ENCODE measurements at regions of chr9 and their contacts with region 1.

Region 1: DNA sequence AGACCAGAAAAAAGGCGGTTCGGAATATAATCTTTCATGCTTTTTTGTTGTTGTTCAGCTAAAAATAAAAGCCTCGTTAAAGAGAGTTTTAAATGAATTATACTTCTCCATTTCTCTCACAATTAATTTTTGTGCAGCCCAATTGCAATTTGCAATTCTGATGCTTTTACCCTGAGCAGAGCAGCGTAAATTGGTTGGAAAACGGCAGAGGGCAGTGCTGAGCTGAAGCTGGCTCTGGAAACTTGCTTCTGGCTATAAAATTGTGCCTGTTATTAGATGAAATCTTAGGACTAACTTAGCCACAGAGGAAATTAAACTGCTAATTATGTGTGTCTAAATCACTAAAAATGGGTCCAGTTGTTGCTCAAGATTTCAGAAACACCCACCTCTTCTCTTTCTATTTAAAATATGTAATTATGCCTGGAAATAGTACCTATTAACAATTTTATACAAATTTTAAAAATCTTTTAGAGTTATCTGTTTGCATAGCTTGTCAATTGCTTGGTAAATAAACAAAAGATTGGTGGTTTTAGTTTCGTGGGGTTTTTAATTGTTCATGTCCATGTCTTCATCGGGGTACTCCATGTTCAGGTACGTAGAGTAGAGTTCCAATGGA is 441.8 kb upstream of the TLE4 start:
- DNase-seq: peak; percentile 21
- H3K4me3 ChIP-seq: no peak overlapping the region
- H3K27ac ChIP-seq: no peak overlapping the region
- H3K4me1 ChIP-seq: no peaks in the 10 kb centered on the region
- H3K27me3 ChIP-seq: no peaks in the 10 kb centered on the region
- CTCF ChIP-seq: peak; percentile 79 to 92

Region 2: DNA sequence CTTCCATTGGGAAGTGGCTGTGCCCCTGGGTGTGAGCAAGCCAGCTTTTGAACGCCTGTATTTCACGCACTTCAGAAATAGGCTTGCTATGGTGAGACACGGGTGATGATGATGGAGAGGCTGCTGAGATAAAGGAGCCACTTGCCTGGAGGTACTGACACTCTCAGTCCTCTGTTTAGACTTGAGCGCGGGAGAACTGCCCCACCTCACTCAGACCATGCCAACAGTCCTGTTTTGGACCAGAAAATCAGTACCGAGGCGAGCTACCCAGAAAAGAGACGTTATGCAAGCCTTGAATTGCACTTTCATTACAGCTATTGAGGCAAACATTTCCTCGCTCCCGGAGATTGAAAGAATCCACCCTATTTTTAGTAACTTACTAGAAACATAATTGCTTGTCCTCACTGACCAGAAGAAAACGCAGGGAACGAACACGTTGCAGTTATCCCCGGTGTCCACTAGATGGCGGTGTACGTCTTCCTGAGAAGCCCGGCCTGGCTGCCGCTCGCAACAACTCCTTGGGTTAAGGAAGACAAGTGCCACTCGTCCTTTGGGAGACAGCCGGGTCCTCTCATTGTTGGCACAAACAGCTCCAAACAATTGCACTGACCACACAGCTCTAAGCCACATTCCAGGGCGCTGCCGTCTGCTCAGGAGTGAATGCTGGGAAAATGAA is 690.6 kb before region 1 on chr9:
- CTCF ChIA-PET with region 1: no interaction called
- dilution Hi-C with region 1: no loop called
- in situ Hi-C with region 1: no loop called
- intact Hi-C with region 1: loop called (anchors 5 kb)
- DNase-seq: peak; percentile 64
- H3K4me3 ChIP-seq: no peak overlapping the region
- H3K27ac ChIP-seq: no peak overlapping the region
- H3K4me1 ChIP-seq: no peaks in the 10 kb centered on the region
- H3K27me3 ChIP-seq: peaks cover 2% of the 10 kb centered on the region
- CTCF ChIP-seq: peak; percentile 93 to 94

Region 3: GRCh38 chr9:78601957-78602565 is 527.9 kb before region 1 on chr9:
- CTCF ChIA-PET with region 1: no interaction called
- dilution Hi-C with region 1: no loop called
- in situ Hi-C with region 1: no loop called
- intact Hi-C with region 1: loop called (anchors 2 kb)
- DNase-seq: peak; percentile 75
- H3K4me3 ChIP-seq: peak overlapping the region in 1 of 3 experiments; percentile 2
- H3K27ac ChIP-seq: peak overlapping the region; percentile 31
- H3K4me1 ChIP-seq: peaks cover 6% of the 10 kb centered on the region
- H3K27me3 ChIP-seq: no peaks in the 10 kb centered on the region
- CTCF ChIP-seq: peak; percentile 87 to 93

Region 4: GRCh38 chr9:78820855-78821822 is 308.8 kb before region 1 on chr9:
- CTCF ChIA-PET with region 1: no interaction called
- dilution Hi-C with region 1: no loop called
- in situ Hi-C with region 1: no loop called
- intact Hi-C with region 1: loop called (anchors 5 kb)
- DNase-seq: peak; percentile 29
- H3K4me3 ChIP-seq: peak overlapping the region; percentile 19 to 30 (median 29)
- H3K27ac ChIP-seq: no peak overlapping the region
- H3K4me1 ChIP-seq: no peaks in the 10 kb centered on the region
- H3K27me3 ChIP-seq: no peaks in the 10 kb centered on the region
- CTCF ChIP-seq: peak; percentile 73 to 74

Region 5: DNA sequence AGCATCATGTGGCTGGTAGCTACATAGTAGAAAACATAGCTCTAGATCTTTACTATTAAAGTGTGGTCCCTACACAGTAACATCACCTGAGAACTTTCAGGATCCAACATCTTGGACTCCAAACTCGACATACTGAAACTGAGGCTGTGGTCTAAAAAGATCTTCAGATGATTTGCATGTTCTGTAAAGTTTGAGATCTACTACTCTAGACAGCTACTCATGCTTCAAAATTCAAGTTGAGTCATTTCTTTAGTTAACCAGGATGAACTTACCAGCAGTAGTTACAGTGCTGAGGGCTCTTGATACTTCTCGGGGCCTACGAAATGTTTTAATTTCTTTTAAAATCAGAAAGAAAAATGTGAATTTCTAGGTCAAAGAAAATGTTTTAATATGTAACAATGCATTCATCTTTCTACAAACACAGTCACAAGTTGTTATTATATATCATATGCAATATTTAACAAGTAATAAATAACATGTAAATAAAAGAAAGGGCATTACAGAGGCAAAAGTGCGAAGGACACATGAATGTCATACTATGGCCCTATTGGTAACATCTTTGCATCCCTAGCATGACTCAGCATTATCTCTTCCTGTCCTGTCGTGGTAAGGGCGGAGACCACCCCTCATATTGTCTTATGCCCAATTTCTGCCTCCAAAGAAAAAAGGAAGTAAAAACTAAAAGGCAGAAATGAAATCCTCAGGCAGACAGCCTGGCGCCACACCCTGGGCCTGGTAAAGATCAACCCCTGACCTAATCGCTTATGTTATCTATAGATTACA is 122.1 kb before region 1 on chr9:
- CTCF ChIA-PET with region 1: no interaction called
- dilution Hi-C with region 1: no loop called
- in situ Hi-C with region 1: no loop called
- intact Hi-C with region 1: no loop called
- DNase-seq: no peak
- H3K4me3 ChIP-seq: no peak overlapping the region
- H3K27ac ChIP-seq: no peak overlapping the region
- H3K4me1 ChIP-seq: peaks cover 6% of the 10 kb centered on the region
- H3K27me3 ChIP-seq: no peaks in the 10 kb centered on the region
- CTCF ChIP-seq: no peak

Region 6: GRCh38 chr9:79155308-79155707 is 25.3 kb after region 1 on chr9:
- CTCF ChIA-PET with region 1: no interaction called
- dilution Hi-C with region 1: no loop called
- in situ Hi-C with region 1: no loop called
- intact Hi-C with region 1: no loop called
- DNase-seq: peak; percentile 45
- H3K4me3 ChIP-seq: no peak overlapping the region
- H3K27ac ChIP-seq: no peak overlapping the region
- H3K4me1 ChIP-seq: no peaks in the 10 kb centered on the region
- H3K27me3 ChIP-seq: no peaks in the 10 kb centered on the region
- CTCF ChIP-seq: peak; percentile 18 to 47

Region 7: DNA sequence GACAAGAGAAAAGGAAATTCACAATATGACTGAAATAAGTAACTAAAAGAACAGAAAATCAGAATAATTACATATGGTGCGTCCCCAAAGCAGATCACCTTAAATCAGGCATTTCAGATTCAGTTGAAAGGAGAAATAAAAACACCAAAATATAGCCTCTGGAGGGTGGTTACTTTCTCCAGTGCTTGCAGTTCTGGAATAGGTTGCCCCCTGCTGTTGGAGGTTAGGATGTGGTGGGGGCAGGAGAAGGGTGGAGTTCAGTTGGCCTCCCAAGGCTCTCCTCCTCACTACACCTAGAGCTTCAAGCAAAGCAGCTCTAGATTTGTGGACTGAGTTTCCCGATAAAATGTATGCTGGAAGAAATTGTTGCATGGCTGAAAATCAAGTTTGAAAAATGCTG is 103.6 kb after region 1 on chr9:
- CTCF ChIA-PET with region 1: no interaction called
- dilution Hi-C with region 1: no loop called
- in situ Hi-C with region 1: no loop called
- intact Hi-C with region 1: loop called (anchors 1 kb)
- DNase-seq: peak; percentile 46
- H3K4me3 ChIP-seq: no peak overlapping the region
- H3K27ac ChIP-seq: no peak overlapping the region
- H3K4me1 ChIP-seq: no peaks in the 10 kb centered on the region
- H3K27me3 ChIP-seq: no peaks in the 10 kb centered on the region
- CTCF ChIP-seq: peak; percentile 78 to 79

Region 8: GRCh38 chr9:79432485-79432884 is 302.5 kb after region 1 on chr9:
- CTCF ChIA-PET with region 1: interaction called, 7 read pairs
- dilution Hi-C with region 1: no loop called
- in situ Hi-C with region 1: no loop called
- intact Hi-C with region 1: loop called (anchors 5 kb)
- DNase-seq: no peak
- H3K4me3 ChIP-seq: no peak overlapping the region
- H3K27ac ChIP-seq: no peak overlapping the region
- H3K4me1 ChIP-seq: no peaks in the 10 kb centered on the region
- H3K27me3 ChIP-seq: no peaks in the 10 kb centered on the region
- CTCF ChIP-seq: peak in 1 of 2 donors; percentile 19

Region 9: GRCh38 chr9:79955300-79955699 is 825.3 kb after region 1 on chr9:
- CTCF ChIA-PET with region 1: no interaction called
- dilution Hi-C with region 1: no loop called
- in situ Hi-C with region 1: no loop called
- intact Hi-C with region 1: loop called (anchors 10 kb)
- DNase-seq: no peak
- H3K4me3 ChIP-seq: no peak overlapping the region
- H3K27ac ChIP-seq: no peak overlapping the region
- H3K4me1 ChIP-seq: no peaks in the 10 kb centered on the region
- H3K27me3 ChIP-seq: no peaks in the 10 kb centered on the region
- CTCF ChIP-seq: peak in 1 of 2 donors; percentile 41

Measured in mammary epithelial cell (primary cell).